Activated T-helper 2 cell treated with anti-CD3 and anti-CD28 coated beads, Interferon-gamma antibody, Interleukin-2, Interleukin-4, amounts not matched to agents 10 μg/mL and 5 μg/mL and 100 μg/mL, durations not matched to agents 14 hours and 24 hours and 36 hours (primary cell): ENCODE measurements at regions of chr22 and their contacts with region 1.

Region 1: DNA sequence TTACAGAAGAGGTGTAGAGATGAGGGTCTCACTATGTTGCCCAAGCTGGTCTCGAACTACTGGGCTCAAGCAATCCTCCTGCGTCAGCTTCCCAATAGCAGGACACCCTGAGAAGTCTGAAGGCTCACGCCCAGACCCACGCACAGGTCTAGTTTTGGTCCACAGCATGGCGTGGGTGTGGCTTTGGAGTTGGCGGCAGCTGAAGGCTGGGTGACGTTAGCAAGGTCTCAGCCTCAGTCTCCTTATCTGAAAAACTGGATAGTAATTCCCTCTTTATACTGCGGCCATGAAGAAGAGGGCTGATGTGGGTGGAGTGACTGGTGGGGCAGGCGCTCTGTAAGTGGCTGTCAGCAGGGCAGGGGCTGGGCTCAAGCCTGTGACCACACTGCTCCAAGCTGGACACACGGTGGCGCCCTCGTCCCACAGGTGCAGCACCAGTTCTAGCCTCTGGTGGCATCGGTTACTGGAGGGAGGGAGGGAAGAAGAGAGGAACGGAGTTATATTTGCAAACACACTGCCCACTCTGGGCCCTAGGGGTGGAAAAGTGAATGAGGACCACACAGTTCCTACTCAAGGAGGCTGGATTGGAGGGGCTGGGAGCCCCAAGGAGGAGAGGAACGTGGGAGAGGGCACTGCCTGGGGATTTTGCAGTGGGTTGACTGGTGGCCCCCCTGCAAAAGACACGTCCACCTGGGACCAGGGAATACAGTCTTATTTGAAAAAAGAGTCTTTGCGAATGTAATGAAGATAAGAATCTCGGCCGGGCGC is 19.6 kb upstream of the CARD10 start:
- DNase-seq: peak; percentile 82
- H3K4me3 Mint-ChIP-seq: no peak overlapping the region
- H3K27ac Mint-ChIP-seq: peak overlapping the region; percentile 56
- H3K4me1 Mint-ChIP-seq: peaks cover 40% of the 10 kb centered on the region
- H3K27me3 Mint-ChIP-seq: peaks cover 14% of the 10 kb centered on the region

Region 2: DNA sequence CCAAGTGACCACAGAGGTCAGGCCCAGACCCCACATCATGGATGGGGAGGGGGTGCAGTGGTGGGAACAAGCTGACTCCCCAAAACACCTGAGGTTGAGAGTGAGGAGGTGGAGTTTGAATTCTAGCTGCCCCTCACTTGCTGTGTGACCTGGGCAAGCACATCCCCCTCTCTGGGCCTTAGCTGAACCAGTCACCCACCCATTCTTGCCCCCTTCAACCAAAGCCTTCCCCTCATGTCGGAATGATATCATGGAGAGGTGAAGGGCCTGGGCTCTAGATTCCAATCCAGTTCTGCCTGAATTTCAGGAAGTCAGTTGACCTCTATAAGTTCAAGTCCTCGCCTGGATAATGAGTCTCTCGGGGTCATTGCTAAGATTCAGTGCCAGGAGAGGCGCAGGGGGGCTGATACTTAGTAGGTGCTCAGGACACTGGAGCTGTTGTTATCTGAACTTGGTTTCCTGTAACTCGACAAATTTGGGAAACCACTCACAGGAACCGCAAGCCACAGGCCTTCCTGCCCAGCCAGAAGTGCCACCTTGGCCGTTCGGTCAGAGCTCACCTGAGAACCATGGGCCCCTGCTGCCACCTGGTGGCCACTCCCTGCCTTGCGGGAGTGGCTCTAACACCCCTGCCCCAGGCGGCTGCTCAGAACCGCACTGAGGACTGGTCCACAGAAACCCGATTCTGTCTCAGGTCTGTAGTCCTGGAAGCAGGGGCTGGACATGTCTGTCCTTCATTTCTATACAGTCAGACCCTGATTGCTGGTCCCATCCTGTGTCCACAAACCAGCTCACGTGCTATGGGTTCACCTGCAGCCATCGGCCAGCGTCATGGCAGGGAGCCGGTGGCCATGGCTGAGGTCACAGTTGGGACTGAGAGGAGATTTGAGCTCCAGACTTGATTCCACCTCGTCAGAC is 28.4 kb after region 1 on chr22:
- intact Hi-C with region 1: loop called (anchors 1 kb)
- DNase-seq: peak; percentile 87
- H3K4me3 Mint-ChIP-seq: no peak overlapping the region
- H3K27ac Mint-ChIP-seq: peak overlapping the region; percentile 61
- H3K4me1 Mint-ChIP-seq: peaks cover 14% of the 10 kb centered on the region
- H3K27me3 Mint-ChIP-seq: peaks cover 25% of the 10 kb centered on the region

Region 3: DNA sequence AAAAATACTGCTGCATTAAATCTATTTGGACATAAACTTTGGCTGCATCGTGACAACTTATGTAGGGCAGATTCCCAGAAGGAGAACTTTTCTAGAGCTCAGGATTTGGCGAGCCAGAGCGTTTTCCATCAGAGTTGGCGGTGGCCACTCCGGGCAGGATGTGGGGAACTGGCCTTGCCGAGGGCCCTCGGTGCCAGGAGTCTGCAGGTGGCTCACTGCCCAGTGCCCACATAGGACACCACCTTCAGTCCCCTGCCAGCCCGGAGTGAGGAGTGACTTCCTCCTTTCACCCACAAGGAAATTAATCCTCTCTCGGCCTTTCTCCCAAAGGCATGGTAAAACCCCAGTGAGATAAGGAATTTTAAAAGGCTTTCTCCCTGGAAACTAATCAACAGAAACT is 42.7 kb after region 1 on chr22:
- intact Hi-C with region 1: no loop called
- DNase-seq: no peak
- H3K4me3 Mint-ChIP-seq: no peak overlapping the region
- H3K27ac Mint-ChIP-seq: no peak overlapping the region
- H3K4me1 Mint-ChIP-seq: peaks cover 6% of the 10 kb centered on the region
- H3K27me3 Mint-ChIP-seq: peaks cover 15% of the 10 kb centered on the region

Region 4: DNA sequence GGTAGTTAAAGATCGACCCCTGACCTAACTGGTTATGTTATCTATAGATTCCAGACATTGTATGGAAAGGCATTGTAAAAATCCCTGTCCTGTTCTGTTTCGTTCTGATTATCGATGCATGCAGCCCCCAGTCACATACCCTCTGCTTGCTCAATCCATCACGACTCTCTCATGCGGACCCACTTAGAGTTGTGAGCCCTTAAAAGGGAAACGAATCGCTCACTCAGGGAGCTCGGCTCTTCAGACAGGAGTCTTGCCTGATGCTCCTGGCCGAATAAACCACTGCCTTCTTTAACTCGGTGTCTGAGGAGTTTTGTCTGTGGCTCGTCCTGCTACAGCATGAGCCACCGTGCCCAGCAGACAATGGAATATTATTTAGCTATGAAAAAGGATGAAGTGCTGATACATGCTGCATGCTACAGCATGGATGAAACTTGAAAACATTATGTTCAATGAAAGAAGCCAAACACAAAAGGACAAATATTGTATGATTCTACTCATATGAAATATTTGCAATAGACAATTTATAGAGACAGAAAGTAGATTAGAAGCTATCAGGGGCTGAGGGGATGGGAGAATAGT is 53.1 kb after region 1 on chr22:
- intact Hi-C with region 1: loop called (anchors 1 kb)
- DNase-seq: no peak
- H3K4me3 Mint-ChIP-seq: peak overlapping the region; percentile 74
- H3K27ac Mint-ChIP-seq: peak overlapping the region; percentile 34
- H3K4me1 Mint-ChIP-seq: peaks cover 9% of the 10 kb centered on the region
- H3K27me3 Mint-ChIP-seq: peaks cover 5% of the 10 kb centered on the region